Naive thymus-derived CD4-positive, alpha-beta T cell (primary cell): ENCODE measurements at regions of chr10 and their contacts with region 1.

Region 1: GRCh38 chr10:110591760-110592159 is 24.3 kb downstream of the SMC3 start:
- DNase-seq: no peak
- ATAC-seq: no peak
- H3K4me3 ChIP-seq: no peak overlapping the region
- H3K4me3 Mint-ChIP-seq: no peak overlapping the region
- H3K27ac ChIP-seq: no peak overlapping the region
- H3K27ac Mint-ChIP-seq: no peak overlapping the region
- H3K4me1 ChIP-seq: no peaks in the 10 kb centered on the region
- H3K4me1 Mint-ChIP-seq: peaks cover 0 to 6% (median 0%) of the 10 kb centered on the region in 7 donors
- H3K27me3 ChIP-seq: no peaks in the 10 kb centered on the region
- H3K27me3 Mint-ChIP-seq: no peaks in the 10 kb centered on the region

Region 2: GRCh38 chr10:110313674-110314073 is 278.1 kb before region 1 on chr10:
- CTCF ChIA-PET with region 1: no interaction called
- POLR2A ChIA-PET with region 1: no interaction called
- intact Hi-C with region 1: no loop called
- DNase-seq: no peak
- ATAC-seq: no peak
- H3K4me3 ChIP-seq: no peak overlapping the region
- H3K4me3 Mint-ChIP-seq: no peak overlapping the region
- H3K27ac ChIP-seq: no peak overlapping the region
- H3K27ac Mint-ChIP-seq: no peak overlapping the region
- H3K4me1 ChIP-seq: peaks cover 0 to 4% of the 10 kb centered on the region in 2 donors
- H3K4me1 Mint-ChIP-seq: peaks cover 0 to 34% (median 0%) of the 10 kb centered on the region in 7 donors
- H3K27me3 ChIP-seq: no peaks in the 10 kb centered on the region
- H3K27me3 Mint-ChIP-seq: peaks cover 0 to 4% (median 0%) of the 10 kb centered on the region in 5 donors

Region 3: GRCh38 chr10:110576220-110576619 is 15.5 kb before region 1 on chr10:
- CTCF ChIA-PET with region 1: no interaction called
- POLR2A ChIA-PET with region 1: interaction called, 3 read pairs
- intact Hi-C with region 1: loop called in 1 of 2 experiments (anchors 2 kb)
- DNase-seq: no peak
- ATAC-seq: no peak
- H3K4me3 ChIP-seq: no peak overlapping the region
- H3K4me3 Mint-ChIP-seq: no peak overlapping the region
- H3K27ac ChIP-seq: no peak overlapping the region
- H3K27ac Mint-ChIP-seq: peak overlapping the region in 2 of 9 donors; percentile 7 to 42
- H3K4me1 ChIP-seq: peaks cover 7 to 13% of the 10 kb centered on the region in 2 donors
- H3K4me1 Mint-ChIP-seq: peaks cover 19 to 54% (median 38%) of the 10 kb centered on the region in 7 donors
- H3K27me3 ChIP-seq: no peaks in the 10 kb centered on the region
- H3K27me3 Mint-ChIP-seq: no peaks in the 10 kb centered on the region